Psoas muscle (tissue), 8 donors: ENCODE measurements at regions of chr7 and their contacts with region 1.

Region 1: GRCh38 chr7:142188846-142189245 is 69.0 kb downstream of the PRSS58 start:
- DNase-seq: no peak
- ATAC-seq: no peak
- H3K4me3 ChIP-seq: no peak overlapping the region
- H3K27ac ChIP-seq: no peak overlapping the region
- H3K4me1 ChIP-seq: no peaks in the 10 kb centered on the region
- H3K27me3 ChIP-seq: no peaks in the 10 kb centered on the region
- CTCF ChIP-seq: no peak

Region 2: DNA sequence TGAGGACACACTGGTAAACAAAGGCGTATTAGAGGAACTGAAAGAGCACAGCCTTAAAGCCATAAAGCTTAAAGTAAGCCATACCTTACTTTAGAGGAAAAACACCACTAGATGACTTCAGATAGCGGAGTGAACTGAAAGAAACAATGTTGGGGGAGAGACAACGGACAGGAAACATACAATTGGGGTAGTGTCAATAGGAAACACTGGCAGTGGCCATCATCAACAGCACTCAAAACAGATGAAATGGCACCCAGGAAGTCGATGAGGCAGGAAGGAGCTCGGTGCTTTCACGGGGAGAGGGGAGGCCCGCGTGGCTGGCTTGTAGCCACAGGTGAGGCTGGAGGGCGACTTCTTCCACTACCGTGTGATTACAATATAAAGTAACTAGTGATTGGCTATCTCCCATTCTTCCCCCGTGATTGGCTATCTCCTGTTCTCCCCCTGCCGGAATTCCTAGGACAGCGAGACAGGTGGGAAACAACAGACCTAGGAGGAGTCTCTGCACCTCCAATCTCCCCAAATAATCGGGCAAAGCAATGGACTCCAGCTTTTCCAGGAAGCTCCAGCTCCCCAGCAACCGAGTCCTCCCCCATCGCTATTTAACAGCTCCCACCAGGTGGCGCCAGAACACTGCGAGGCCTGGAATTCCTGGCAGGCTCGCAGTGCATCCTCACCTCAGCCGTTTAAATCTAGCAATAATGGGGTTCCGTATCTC is 212.9 kb before region 1 on chr7:
- intact Hi-C with region 1: loop called in 1 of 2 experiments (anchors 5 kb)
- DNase-seq: peak; percentile 53 to 61
- ATAC-seq: no peak
- H3K4me3 ChIP-seq: peak overlapping the region; percentile 32
- H3K27ac ChIP-seq: no peak overlapping the region
- H3K4me1 ChIP-seq: no peaks in the 10 kb centered on the region
- H3K27me3 ChIP-seq: no peaks in the 10 kb centered on the region
- CTCF ChIP-seq: peak; percentile 44

Region 3: DNA sequence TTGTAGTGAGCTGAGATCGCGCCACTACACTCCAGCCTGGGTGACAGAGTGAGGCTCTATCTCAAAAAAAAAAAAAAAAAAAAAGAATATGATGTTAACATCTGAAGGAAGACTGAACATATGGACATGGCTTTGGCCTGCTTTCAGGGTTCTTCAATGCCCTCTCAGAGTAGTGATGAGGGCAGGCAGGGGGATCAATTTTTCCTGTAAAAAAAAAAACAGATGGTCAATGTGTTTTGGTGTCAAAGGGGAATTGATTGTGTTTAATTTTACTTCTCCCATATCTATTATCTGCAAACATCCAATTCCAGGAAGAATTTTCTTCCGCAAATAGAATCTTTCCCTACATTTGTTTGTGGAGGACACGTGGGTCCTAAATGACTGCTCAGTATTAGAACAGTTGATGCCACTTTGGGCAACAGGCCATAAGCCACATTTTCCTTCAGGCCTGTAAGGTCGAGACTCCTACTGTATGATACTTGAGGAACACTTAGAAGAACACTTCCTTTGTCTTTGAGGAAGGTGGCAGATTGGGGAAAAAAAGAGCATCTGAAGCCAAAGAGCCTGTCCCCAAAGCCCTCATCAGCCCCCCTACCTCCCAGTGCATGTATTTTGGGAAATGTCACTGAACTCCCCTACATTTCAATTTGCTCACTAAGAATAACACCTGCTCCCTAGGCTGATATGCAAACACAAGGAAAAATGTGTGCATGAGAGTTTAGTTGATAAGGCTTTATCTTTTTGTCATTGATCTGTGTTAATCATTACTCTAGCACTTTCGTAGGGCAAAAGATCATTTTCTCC is 49.0 kb before region 1 on chr7:
- intact Hi-C with region 1: no loop called
- DNase-seq: no peak
- ATAC-seq: no peak
- H3K4me3 ChIP-seq: no peak overlapping the region
- H3K27ac ChIP-seq: no peak overlapping the region
- H3K4me1 ChIP-seq: no peaks in the 10 kb centered on the region
- H3K27me3 ChIP-seq: no peaks in the 10 kb centered on the region
- CTCF ChIP-seq: no peak

Region 4: GRCh38 chr7:142231716-142232115 is 42.9 kb after region 1 on chr7:
- intact Hi-C with region 1: no loop called
- DNase-seq: no peak
- ATAC-seq: no peak
- H3K4me3 ChIP-seq: no peak overlapping the region
- H3K27ac ChIP-seq: no peak overlapping the region
- H3K4me1 ChIP-seq: no peaks in the 10 kb centered on the region
- H3K27me3 ChIP-seq: no peaks in the 10 kb centered on the region
- CTCF ChIP-seq: no peak

Region 5: DNA sequence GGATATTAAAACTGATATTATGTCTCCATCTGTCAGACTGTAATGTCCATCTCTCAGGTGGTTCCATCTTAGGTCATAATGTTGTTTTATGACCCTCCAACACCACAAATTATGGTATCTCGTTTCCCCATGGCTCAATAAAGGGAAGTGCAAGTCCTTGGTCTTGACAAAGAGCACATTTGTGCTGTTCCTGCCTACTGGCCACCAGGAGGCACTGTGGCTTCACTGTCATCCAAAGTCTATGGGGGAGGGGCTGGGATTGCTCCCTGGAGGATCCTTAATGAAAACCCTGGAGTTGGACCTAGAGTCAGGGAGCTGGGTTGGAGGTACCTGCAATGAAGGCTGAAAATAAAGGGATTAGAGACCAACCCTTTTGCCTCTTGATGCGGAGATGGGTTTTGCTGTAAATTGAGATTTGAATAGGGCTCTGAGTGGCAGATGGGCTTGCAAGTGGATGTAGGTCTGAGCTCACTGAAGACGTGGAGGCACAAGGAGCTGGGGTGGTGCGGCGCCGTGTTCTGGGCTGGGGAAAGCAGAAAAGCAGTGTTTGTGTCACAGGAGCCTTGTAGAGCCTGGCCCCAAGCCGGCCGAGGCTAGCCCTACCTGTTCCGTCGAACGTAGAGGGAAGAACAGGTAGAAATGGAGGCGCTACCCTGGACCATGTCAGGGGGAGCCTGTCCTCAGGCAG is 249.5 kb after region 1 on chr7:
- intact Hi-C with region 1: no loop called
- DNase-seq: no peak
- ATAC-seq: peak in 2 of 4 donors; percentile 65 to 78
- H3K4me3 ChIP-seq: no peak overlapping the region
- H3K27ac ChIP-seq: no peak overlapping the region
- H3K4me1 ChIP-seq: no peaks in the 10 kb centered on the region
- H3K27me3 ChIP-seq: no peaks in the 10 kb centered on the region
- CTCF ChIP-seq: peak; percentile 44

Region 6: DNA sequence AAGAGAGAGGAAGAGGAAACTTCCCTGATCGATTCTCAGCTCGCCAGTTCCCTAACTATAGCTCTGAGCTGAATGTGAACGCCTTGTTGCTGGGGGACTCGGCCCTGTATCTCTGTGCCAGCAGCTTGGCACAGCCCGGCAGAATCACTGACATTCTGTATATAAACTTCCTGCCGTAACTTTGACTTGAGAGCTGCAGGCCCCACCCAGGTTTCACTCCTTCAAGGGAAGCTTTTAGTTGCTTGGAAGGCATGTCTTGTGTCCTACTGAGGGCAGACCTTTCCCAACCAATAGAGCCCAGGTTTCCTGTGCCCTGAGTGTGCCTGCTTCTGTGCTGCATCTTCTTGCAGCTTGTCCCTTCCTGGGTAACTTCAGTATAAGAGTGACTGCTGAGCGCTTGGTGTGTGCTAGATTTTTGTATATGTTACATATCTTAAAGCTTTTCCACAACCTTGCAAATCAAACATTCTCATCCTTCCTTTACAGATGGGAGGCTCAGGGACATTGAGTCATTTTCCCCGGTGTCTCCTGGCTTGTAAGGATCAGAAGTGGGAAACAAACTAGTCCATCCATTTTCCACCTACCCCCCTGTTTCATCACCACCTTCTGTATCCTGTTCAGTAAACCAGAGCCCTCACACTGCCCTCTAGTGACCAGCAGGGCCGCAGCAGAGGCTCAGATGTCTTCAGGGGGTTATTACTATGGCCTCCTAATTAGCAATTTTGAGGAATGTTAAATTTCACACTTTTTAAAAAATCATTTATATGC is 294.2 kb after region 1 on chr7:
- intact Hi-C with region 1: no loop called
- DNase-seq: peak; percentile 32 to 62
- ATAC-seq: peak; percentile 52 to 83 (median 78)
- H3K4me3 ChIP-seq: no peak overlapping the region
- H3K27ac ChIP-seq: no peak overlapping the region
- H3K4me1 ChIP-seq: peaks cover 3% of the 10 kb centered on the region
- H3K27me3 ChIP-seq: no peaks in the 10 kb centered on the region
- CTCF ChIP-seq: peak; percentile 70